MCF 10A (cell line): ENCODE measurements at regions of chr18 and their contacts with region 1.

Region 1: GRCh38 chr18:42298759-42299675 is 344.0 kb downstream of the PIK3C3 start:
- DNase-seq: peak; percentile 75
- H3K4me3 Mint-ChIP-seq: no peak overlapping the region
- H3K27ac Mint-ChIP-seq: no peak overlapping the region
- H3K4me1 Mint-ChIP-seq: no peaks in the 10 kb centered on the region
- H3K27me3 Mint-ChIP-seq: peaks cover 12% of the 10 kb centered on the region
- CTCF ChIP-seq: peak; percentile 81

Region 2: GRCh38 chr18:41216341-41217003 is 1082.5 kb before region 1 on chr18:
- CTCF ChIA-PET with region 1: no interaction called
- POLR2A ChIA-PET with region 1: no interaction called
- intact Hi-C with region 1: no loop called
- DNase-seq: no peak
- H3K4me3 Mint-ChIP-seq: no peak overlapping the region
- H3K27ac Mint-ChIP-seq: no peak overlapping the region
- H3K4me1 Mint-ChIP-seq: no peaks in the 10 kb centered on the region
- H3K27me3 Mint-ChIP-seq: no peaks in the 10 kb centered on the region
- CTCF ChIP-seq: no peak

Region 3: DNA sequence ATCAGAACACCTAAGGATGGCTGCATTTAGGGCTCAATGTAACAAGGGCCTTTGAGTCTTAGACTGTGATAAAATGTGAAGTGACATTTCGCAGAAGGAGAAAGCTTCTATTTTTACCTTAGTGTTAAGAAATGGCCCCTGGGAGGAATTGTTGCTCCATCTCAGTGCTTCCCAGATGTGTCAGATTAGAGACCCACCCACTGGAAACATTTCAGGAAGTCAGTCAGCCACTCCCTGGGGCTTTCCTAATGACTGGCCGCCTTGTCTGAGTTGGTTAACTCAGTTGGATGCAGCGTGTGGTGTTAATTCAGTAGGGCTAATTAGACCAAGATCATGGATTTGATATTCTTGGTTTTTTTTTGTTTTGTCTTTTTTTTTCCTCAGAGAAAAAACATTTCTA is 11.9 kb after region 1 on chr18:
- CTCF ChIA-PET with region 1: interaction called, 63 read pairs
- POLR2A ChIA-PET with region 1: no interaction called
- intact Hi-C with region 1: no loop called
- DNase-seq: peak; percentile 90
- H3K4me3 Mint-ChIP-seq: no peak overlapping the region
- H3K27ac Mint-ChIP-seq: no peak overlapping the region
- H3K4me1 Mint-ChIP-seq: peaks cover 20% of the 10 kb centered on the region
- H3K27me3 Mint-ChIP-seq: peaks cover 6% of the 10 kb centered on the region
- CTCF ChIP-seq: no peak

Region 4: DNA sequence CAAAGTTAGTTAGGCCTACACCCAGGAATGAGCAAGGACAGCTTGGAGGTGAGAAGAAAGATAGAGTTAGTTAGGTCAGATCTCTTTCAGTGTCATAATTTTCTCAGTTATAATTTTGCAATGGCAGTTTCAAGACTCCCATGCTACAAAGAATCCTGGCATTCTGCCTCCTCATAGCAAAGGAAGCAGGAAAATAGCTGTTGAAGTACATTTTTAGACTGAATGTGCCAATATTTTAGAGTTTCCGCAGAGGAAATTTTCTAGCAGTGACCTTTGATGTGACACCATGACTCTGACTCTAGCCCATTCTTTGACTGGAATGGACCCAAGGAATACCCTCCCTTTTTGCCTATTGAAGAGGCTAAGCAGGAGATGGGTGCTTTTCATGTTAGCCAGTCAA is 27.7 kb after region 1 on chr18:
- CTCF ChIA-PET with region 1: interaction called, 13 read pairs
- POLR2A ChIA-PET with region 1: no interaction called
- intact Hi-C with region 1: no loop called
- DNase-seq: no peak
- H3K4me3 Mint-ChIP-seq: no peak overlapping the region
- H3K27ac Mint-ChIP-seq: no peak overlapping the region
- H3K4me1 Mint-ChIP-seq: no peaks in the 10 kb centered on the region
- H3K27me3 Mint-ChIP-seq: no peaks in the 10 kb centered on the region
- CTCF ChIP-seq: no peak

Region 5: GRCh38 chr18:42807887-42808286 is 508.9 kb after region 1 on chr18:
- CTCF ChIA-PET with region 1: no interaction called
- POLR2A ChIA-PET with region 1: no interaction called
- intact Hi-C with region 1: no loop called
- DNase-seq: no peak
- H3K4me3 Mint-ChIP-seq: no peak overlapping the region
- H3K27ac Mint-ChIP-seq: no peak overlapping the region
- H3K4me1 Mint-ChIP-seq: no peaks in the 10 kb centered on the region
- H3K27me3 Mint-ChIP-seq: peaks cover 44% of the 10 kb centered on the region
- CTCF ChIP-seq: no peak

Region 6: DNA sequence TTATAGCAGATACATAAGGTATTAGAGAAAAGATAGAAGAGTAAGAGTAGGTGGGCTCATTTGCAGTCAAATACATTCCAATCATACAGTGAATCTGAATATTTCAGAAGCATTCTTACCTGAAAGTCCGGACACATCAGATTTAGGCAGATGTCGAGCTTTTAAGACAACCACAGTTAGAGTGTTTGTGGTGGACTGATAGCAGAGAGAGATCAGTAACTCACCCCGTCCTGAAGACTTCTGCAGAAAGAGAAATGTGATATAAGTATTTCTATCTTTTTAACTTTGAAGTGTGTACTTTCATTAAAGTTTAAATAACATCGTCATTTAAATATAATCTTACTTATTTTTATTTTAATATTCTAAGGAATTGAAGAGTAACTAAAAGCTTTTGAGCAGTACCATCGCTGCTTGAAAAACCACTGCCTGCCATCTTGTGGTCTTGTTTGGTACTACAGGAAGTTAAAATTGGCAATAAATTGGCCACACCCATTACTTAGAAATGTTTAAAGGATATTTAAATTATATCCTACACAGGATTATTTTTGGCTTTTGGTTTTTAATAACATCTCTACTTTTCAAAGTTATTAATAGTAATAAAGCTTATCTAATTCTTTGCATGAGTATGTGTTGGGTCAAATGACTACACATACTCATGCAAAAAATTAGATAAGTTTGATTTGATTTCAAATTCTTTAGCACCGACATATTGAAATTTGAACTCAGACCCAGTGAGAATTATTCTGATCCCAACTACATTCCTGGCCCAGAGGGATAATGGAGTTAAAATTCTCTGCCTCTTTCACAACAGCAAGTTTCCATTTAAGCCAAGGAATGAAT is 972.8 kb after region 1 on chr18:
- CTCF ChIA-PET with region 1: interaction called, 70 read pairs
- POLR2A ChIA-PET with region 1: no interaction called
- intact Hi-C with region 1: loop called (anchors 1 kb)
- DNase-seq: peak; percentile 61
- H3K4me3 Mint-ChIP-seq: no peak overlapping the region
- H3K27ac Mint-ChIP-seq: no peak overlapping the region
- H3K4me1 Mint-ChIP-seq: no peaks in the 10 kb centered on the region
- H3K27me3 Mint-ChIP-seq: peaks cover 34% of the 10 kb centered on the region
- CTCF ChIP-seq: peak; percentile 74

Region 7: GRCh38 chr18:43396266-43396665 is 1097.2 kb after region 1 on chr18:
- CTCF ChIA-PET with region 1: interaction called, 6 read pairs
- POLR2A ChIA-PET with region 1: no interaction called
- intact Hi-C with region 1: loop called (anchors 1 kb)
- DNase-seq: peak; percentile 33
- H3K4me3 Mint-ChIP-seq: no peak overlapping the region
- H3K27ac Mint-ChIP-seq: no peak overlapping the region
- H3K4me1 Mint-ChIP-seq: peaks cover 10% of the 10 kb centered on the region
- H3K27me3 Mint-ChIP-seq: peaks cover 20% of the 10 kb centered on the region
- CTCF ChIP-seq: peak; percentile 49

Region 8: GRCh38 chr18:43563780-43564179 is 1264.8 kb after region 1 on chr18:
- CTCF ChIA-PET with region 1: interaction called, 4 read pairs
- POLR2A ChIA-PET with region 1: no interaction called
- intact Hi-C with region 1: loop called (anchors 1 kb)
- DNase-seq: peak; percentile 56
- H3K4me3 Mint-ChIP-seq: no peak overlapping the region
- H3K27ac Mint-ChIP-seq: no peak overlapping the region
- H3K4me1 Mint-ChIP-seq: no peaks in the 10 kb centered on the region
- H3K27me3 Mint-ChIP-seq: peaks cover 69% of the 10 kb centered on the region
- CTCF ChIP-seq: peak; percentile 65